Keratinocyte (primary cell): ENCODE measurements at regions of chr3 and their contacts with region 1.

Region 1: DNA sequence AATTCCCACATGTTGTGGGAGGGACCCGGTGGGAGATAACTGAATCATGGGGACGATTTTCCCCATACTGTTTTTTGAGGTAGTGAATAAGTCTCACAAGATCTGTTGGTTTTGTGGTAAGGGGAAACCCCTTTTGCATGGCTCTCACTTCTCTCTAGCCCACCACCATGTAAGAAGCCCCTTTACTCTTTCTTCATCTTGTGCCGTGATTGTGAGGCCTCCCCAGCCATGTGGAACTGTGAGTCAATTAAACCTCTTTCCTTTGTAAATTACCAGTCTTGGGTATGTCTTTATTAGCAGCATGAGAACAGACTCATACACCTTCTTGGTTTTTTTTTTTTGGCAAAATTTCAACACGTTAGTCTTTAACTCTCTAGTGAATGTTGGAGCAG is 18.1 kb downstream of the ARL8B start:
- DNase-seq: no peak
- H3K4me3 ChIP-seq: no peak overlapping the region
- H3K27ac ChIP-seq: no peak overlapping the region
- H3K4me1 ChIP-seq: peaks cover 46% of the 10 kb centered on the region
- H3K27me3 ChIP-seq: no peaks in the 10 kb centered on the region
- CTCF ChIP-seq: no peak

Region 2: GRCh38 chr3:4986782-4987537 is 153.3 kb before region 1 on chr3:
- dilution Hi-C with region 1: no loop called
- DNase-seq: no peak
- H3K4me3 ChIP-seq: peak overlapping the region in 2 of 3 experiments; percentile 36 to 52
- H3K27ac ChIP-seq: peak overlapping the region; percentile 88
- H3K4me1 ChIP-seq: peaks cover 59% of the 10 kb centered on the region
- H3K27me3 ChIP-seq: no peaks in the 10 kb centered on the region
- CTCF ChIP-seq: no peak

Region 3: GRCh38 chr3:5102532-5102931 is 37.7 kb before region 1 on chr3:
- dilution Hi-C with region 1: loop called (anchors 5 kb)
- DNase-seq: no peak
- H3K4me3 ChIP-seq: no peak overlapping the region
- H3K27ac ChIP-seq: no peak overlapping the region
- H3K4me1 ChIP-seq: no peaks in the 10 kb centered on the region
- H3K27me3 ChIP-seq: no peaks in the 10 kb centered on the region
- CTCF ChIP-seq: no peak

Region 4: DNA sequence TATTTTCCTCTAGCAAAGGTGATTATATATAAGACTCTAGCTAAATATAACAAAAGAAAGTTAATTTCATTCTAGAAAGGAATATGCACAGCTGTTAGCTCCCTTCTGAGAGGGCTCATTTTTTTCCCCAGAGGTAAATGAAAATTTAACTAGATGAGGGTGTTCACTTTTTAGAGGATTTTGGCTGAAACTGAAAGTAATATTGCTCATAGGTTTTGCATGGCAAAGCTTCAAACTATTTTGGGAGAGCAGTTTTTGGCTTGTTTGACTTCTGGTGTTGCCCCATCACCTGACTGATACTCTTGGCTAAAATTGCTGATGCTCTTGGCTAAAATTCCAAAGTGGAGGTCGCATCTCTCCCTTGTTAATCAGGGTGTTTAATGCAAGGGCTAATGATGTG is 359.2 kb after region 1 on chr3:
- dilution Hi-C with region 1: no loop called
- DNase-seq: no peak
- H3K4me3 ChIP-seq: no peak overlapping the region
- H3K27ac ChIP-seq: no peak overlapping the region
- H3K4me1 ChIP-seq: no peaks in the 10 kb centered on the region
- H3K27me3 ChIP-seq: no peaks in the 10 kb centered on the region
- CTCF ChIP-seq: no peak